ENCODE measurements at regions of chr3 and their contacts with region 1.

Region 1: GRCh38 chr3:43372809-43373559 is 86.6 kb downstream of the SNRK start:
- DNase-seq: no peak
- H3K4me3 ChIP-seq: no peak overlapping the region
- H3K27ac ChIP-seq: no peak overlapping the region
- H3K4me1 ChIP-seq: peaks cover 0 to 3% (median 0%) of the 10 kb centered on the region in 4 donors
- H3K27me3 ChIP-seq: no peaks in the 10 kb centered on the region
- CTCF ChIP-seq: no peak
- EP300 ChIP-seq: no peak
- POLR2A ChIP-seq: no peak

Region 2: DNA sequence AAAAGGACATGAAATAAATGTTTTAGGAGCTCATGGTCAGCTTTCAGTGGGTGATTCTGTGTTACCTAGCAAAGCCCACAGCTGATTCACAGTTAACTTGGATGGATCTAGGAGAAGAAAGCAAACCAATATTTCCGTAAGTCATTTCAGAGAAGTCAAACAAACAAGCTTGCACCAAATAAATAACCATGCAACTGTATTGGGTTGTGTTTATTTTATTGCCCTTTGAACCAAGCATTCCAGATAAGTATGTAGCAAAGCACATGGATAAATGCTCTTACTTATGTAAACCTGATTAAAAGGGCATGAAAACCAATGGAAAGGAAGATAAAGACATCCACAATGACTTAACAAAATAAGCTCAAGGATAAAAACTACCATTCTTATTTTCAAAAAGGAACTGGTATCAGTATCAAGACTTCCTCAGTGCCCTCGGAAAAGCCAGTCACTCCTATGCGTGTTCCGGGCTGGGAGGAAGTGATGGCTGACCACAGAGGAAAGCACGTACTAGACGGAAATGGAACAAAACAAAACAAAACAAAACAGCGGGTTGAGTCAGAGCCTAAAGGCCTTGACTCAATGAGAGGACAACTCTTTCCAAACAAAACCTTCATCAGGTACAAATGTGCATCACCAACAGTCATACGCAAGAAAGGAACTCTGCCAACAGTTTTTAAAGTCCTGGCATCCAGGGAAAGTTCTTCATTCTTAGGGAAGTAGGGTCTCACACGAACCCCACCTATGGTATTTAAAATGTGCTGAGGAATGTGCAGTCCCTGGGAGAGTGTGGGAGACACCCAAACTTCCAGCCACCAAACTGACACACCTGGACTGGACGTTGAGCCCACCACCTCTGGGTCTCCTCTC is 16.6 kb after region 1 on chr3:
- in situ Hi-C with region 1: no loop called
- intact Hi-C with region 1: loop called (anchors 1 kb)
- DNase-seq: peak; percentile 47
- H3K4me3 ChIP-seq: no peak overlapping the region
- H3K27ac ChIP-seq: peak overlapping the region; percentile 43 to 69 (median 50)
- H3K4me1 ChIP-seq: peaks cover 0 to 9% (median 3%) of the 10 kb centered on the region in 4 donors
- H3K27me3 ChIP-seq: no peaks in the 10 kb centered on the region
- CTCF ChIP-seq: no peak
- EP300 ChIP-seq: no peak
- POLR2A ChIP-seq: no peak